ENCODE measurements at regions of chr1 and their contacts with region 1.

Region 1: GRCh38 chr1:224052772-224053171 is 61.1 kb upstream of the FBXO28 start:
- DNase-seq: no peak
- ATAC-seq: no peak
- H3K4me3 ChIP-seq: no peak overlapping the region
- H3K27ac ChIP-seq: no peak overlapping the region
- H3K4me1 ChIP-seq: no peaks in the 10 kb centered on the region
- H3K27me3 ChIP-seq: no peaks in the 10 kb centered on the region
- CTCF ChIP-seq: no peak

Region 2: GRCh38 chr1:223645903-223646302 is 406.9 kb before region 1 on chr1:
- intact Hi-C with region 1: no loop called
- DNase-seq: no peak
- ATAC-seq: no peak
- H3K4me3 ChIP-seq: no peak overlapping the region
- H3K27ac ChIP-seq: no peak overlapping the region
- H3K4me1 ChIP-seq: peaks cover 8% of the 10 kb centered on the region
- H3K27me3 ChIP-seq: no peaks in the 10 kb centered on the region
- CTCF ChIP-seq: no peak

Region 3: GRCh38 chr1:223695941-223696340 is 356.8 kb before region 1 on chr1:
- intact Hi-C with region 1: loop called (anchors 2 to 10 kb)
- DNase-seq: no peak
- ATAC-seq: no peak
- H3K4me3 ChIP-seq: no peak overlapping the region
- H3K27ac ChIP-seq: no peak overlapping the region
- H3K4me1 ChIP-seq: peaks cover 5% of the 10 kb centered on the region
- H3K27me3 ChIP-seq: no peaks in the 10 kb centered on the region
- CTCF ChIP-seq: no peak

Region 4: DNA sequence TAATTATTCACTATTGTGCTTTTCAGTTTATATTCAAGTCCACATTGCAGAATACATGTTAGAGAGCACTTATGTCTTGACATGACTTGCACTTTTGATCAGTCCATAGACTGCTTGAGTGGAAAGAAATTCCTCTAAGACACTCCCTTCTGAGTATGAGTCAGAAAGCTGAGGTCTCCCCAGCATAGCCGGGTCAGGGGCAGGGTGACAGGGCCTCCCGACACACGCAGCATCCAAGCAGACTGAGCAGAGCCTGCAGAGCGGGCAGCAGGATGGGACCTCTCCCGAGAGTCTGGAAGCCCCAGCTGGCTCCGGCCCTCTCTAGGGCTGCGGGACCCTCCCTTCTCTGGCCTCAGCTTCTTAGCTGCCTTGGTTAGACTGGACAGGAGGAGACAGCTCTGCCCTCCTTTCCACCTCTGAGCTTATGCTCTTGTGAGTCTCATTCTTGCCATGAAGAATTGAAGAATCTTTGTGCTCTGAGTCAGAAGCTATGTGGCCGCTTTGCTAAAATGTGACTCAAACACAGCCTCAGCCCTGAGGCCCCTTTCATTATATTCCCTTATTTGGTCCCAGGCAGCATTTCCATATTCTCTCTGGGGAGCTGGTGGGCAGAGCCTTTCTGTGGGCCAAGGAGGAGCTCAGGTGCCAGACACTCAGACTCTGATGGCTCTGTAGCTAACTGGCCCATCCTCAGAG is 351.7 kb before region 1 on chr1:
- intact Hi-C with region 1: loop called (anchors 2 to 10 kb)
- DNase-seq: peak in 1 of 2 donors; percentile 46
- ATAC-seq: peak in 3 of 4 donors; percentile 44 to 51 (median 48)
- H3K4me3 ChIP-seq: no peak overlapping the region
- H3K27ac ChIP-seq: peak overlapping the region; percentile 13
- H3K4me1 ChIP-seq: peaks cover 7% of the 10 kb centered on the region
- H3K27me3 ChIP-seq: no peaks in the 10 kb centered on the region
- CTCF ChIP-seq: no peak